ENCODE measurements at regions of chr1 and their contacts with region 1.

Region 1: DNA sequence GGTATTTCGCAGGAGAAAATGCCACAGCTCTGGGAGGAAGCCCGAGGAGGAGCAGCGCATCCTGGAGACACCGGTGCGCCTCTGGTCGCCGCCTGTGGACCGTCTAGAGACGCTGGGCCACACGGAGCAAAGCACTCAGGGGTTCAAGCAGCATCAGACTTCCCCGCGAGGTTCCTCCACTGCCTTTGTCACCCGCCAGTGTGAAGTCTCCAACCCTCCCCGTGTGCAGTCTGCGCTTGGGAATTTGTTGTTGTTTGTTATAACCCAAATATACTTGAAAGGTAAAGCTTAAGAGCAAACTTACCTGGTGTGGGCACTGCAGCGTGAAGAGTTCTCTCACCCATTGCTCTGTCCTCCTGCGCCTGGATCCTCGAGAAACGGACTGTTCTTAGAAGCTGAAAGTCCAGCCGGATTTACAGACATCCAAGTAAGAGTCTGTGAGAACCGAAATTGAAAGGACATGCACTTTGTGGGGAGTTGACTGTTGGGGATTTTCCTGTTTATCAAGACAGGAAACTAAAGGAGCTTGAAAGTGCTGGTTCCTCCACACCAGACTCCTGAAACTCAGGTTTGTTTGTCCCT is at the start of gene GBP4:
- DNase-seq: peak; percentile 28 to 76 (median 52)
- ATAC-seq: peak; percentile 73 to 89 (median 79)
- H3K4me3 ChIP-seq: peak within 1 kb of the TSS; percentile 35 to 79 (median 67)
- H3K27ac ChIP-seq: peak within 1 kb of the TSS; percentile 67 to 94 (median 88)
- H3K4me1 ChIP-seq: peaks cover 0 to 63% (median 30%) of the 10 kb centered on the region in 12 donors
- H3K27me3 ChIP-seq: no peaks in the 10 kb centered on the region
- CTCF ChIP-seq: no peak
- POLR2A ChIP-seq: no peak
- total RNA-seq, gene GBP4: 4.3 to 46.4 (median 6.4) TPM

Region 2: GRCh38 chr1:89065079-89065868 is 133.3 kb before region 1 on chr1 and contains the start of gene GBP1:
- intact Hi-C with region 1: loop called in 1 of 10 experiments (anchors 5 kb)
- DNase-seq: peak in 1 of 5 donors; percentile 44
- ATAC-seq: peak; percentile 74 to 93 (median 85)
- H3K4me3 ChIP-seq: peak within 1 kb of the TSS; percentile 32 to 73 (median 60)
- H3K27ac ChIP-seq: peak within 1 kb of the TSS; percentile 63 to 92 (median 82)
- H3K4me1 ChIP-seq: peaks cover 0 to 62% (median 12%) of the 10 kb centered on the region in 12 donors
- H3K27me3 ChIP-seq: no peaks in the 10 kb centered on the region
- CTCF ChIP-seq: no peak
- POLR2A ChIP-seq: peak in 1 of 2 donors; percentile 34
- total RNA-seq, gene GBP1: 3.6 to 170 (median 6.4) TPM

Region 3: DNA sequence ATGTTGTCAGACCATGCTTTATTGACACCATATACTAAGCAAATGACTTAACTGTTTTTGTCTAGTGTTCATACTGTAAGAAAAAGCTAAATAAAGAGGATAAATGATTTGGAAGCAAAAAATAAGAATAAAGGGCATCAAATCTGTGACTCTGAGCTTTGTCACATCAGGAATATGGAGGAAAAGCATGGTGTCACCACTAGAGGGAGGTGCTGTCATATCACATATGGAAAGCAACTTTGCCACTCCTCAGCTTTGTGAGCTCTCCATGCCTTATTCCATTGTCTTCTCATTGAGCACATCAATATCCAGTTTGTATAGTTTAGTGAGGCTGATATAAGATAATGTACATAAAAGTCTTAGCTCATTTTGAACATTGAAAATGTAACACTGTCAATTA is 112.8 kb before region 1 on chr1:
- intact Hi-C with region 1: loop called in 1 of 10 experiments (anchors 10 kb)
- DNase-seq: peak in 1 of 5 donors; percentile 42
- ATAC-seq: peak in 3 of 4 donors; percentile 41 to 76 (median 52)
- H3K4me3 ChIP-seq: no peak overlapping the region
- H3K27ac ChIP-seq: no peak overlapping the region
- H3K4me1 ChIP-seq: peaks cover 0 to 12% (median 0%) of the 10 kb centered on the region in 12 donors
- H3K27me3 ChIP-seq: no peaks in the 10 kb centered on the region
- CTCF ChIP-seq: peak in 10 of 12 donors; percentile 53 to 90 (median 76)
- POLR2A ChIP-seq: no peak

Region 4: DNA sequence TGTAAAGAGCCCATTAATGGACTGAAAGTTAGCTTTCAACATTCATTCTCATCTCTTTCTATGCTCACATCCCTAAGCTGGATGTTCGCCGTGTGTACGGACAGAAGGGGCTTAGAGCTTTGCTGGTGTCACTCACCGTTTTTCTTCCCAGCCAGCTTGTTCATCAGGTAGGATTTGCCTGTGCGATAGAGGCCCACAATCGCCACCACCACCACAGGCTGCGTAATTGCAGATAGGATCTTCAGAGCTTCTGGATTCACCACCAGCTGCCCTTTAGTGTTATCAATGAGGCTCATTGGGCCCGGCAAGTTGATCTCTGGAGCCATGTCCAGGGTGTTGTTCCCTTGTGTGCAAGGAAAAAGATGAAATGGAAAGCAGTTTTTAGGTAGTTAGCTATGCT is 76.9 kb before region 1 on chr1:
- intact Hi-C with region 1: loop called in 1 of 10 experiments (anchors 5 kb)
- DNase-seq: no peak
- ATAC-seq: no peak
- H3K4me3 ChIP-seq: no peak overlapping the region
- H3K27ac ChIP-seq: no peak overlapping the region
- H3K4me1 ChIP-seq: peaks cover 0 to 43% (median 6%) of the 10 kb centered on the region in 12 donors
- H3K27me3 ChIP-seq: no peaks in the 10 kb centered on the region
- CTCF ChIP-seq: no peak
- POLR2A ChIP-seq: no peak

Region 5: GRCh38 chr1:89129911-89130310 is 68.7 kb before region 1 on chr1:
- intact Hi-C with region 1: loop called in 1 of 10 experiments (anchors 5 kb)
- DNase-seq: no peak
- ATAC-seq: no peak
- H3K4me3 ChIP-seq: no peak overlapping the region
- H3K27ac ChIP-seq: peak overlapping the region in 10 of 12 donors; percentile 62 to 96 (median 81)
- H3K4me1 ChIP-seq: peaks cover 0 to 44% (median 14%) of the 10 kb centered on the region in 12 donors
- H3K27me3 ChIP-seq: no peaks in the 10 kb centered on the region
- CTCF ChIP-seq: no peak
- POLR2A ChIP-seq: no peak

Region 6: GRCh38 chr1:89261926-89262515 is 63.4 kb after region 1 on chr1:
- intact Hi-C with region 1: loop called in 4 of 10 experiments (anchors 2 to 10 kb)
- DNase-seq: peak in 3 of 5 donors; percentile 26 to 46 (median 36)
- ATAC-seq: peak in 3 of 4 donors; percentile 24 to 60 (median 56)
- H3K4me3 ChIP-seq: peak overlapping the region in 9 of 12 donors; percentile 24 to 49 (median 33)
- H3K27ac ChIP-seq: peak overlapping the region in 9 of 12 donors; percentile 9 to 68 (median 30)
- H3K4me1 ChIP-seq: peaks cover 3 to 76% (median 30%) of the 10 kb centered on the region in 12 donors
- H3K27me3 ChIP-seq: no peaks in the 10 kb centered on the region
- CTCF ChIP-seq: no peak
- POLR2A ChIP-seq: no peak

Region 7: GRCh38 chr1:89310505-89310904 is 111.9 kb after region 1 on chr1:
- intact Hi-C with region 1: loop called in 2 of 10 experiments (anchors 5 kb)
- DNase-seq: no peak
- ATAC-seq: peak; percentile 31 to 80 (median 56)
- H3K4me3 ChIP-seq: peak overlapping the region in 5 of 12 donors; percentile 4 to 28 (median 11)
- H3K27ac ChIP-seq: peak overlapping the region; percentile 43 to 91 (median 72)
- H3K4me1 ChIP-seq: peaks cover 0 to 38% (median 26%) of the 10 kb centered on the region in 12 donors
- H3K27me3 ChIP-seq: no peaks in the 10 kb centered on the region
- CTCF ChIP-seq: no peak
- POLR2A ChIP-seq: no peak